ENCODE measurements at regions of chr14 and their contacts with region 1.

Region 1: GRCh38 chr14:21476925-21477681 is at the starts of genes RAB2B and TOX4:
- DNase-seq: peak; percentile 94
- ATAC-seq: peak; percentile 98
- H3K4me3 ChIP-seq: peak within 1 kb of the TSS; percentile 99
- H3K27ac ChIP-seq: peak within 1 kb of the TSS; percentile 77
- H3K4me1 ChIP-seq: peaks cover 5% of the 10 kb centered on the region
- H3K27me3 ChIP-seq: no peaks in the 10 kb centered on the region
- CTCF ChIP-seq: peak; percentile 98 to 99 (median 99)
- EP300 ChIP-seq: peak in 1 of 2 experiments; percentile 46; a peak in 1 of 4 replicates
- POLR2A ChIP-seq: peak; percentile 91
- RAD21 ChIP-seq: peak; percentile 40; the same call in 1 of the 2 replicates
- polyA plus RNA-seq, gene RAB2B: 5.6 to 9.8 TPM
- polyA plus RNA-seq, gene TOX4: 54.7 to 55.5 TPM

Region 2: GRCh38 chr14:21367582-21368144 is 109.4 kb before region 1 on chr14:
- CTCF ChIA-PET with region 1: no interaction called
- POLR2A ChIA-PET with region 1: no interaction called
- RAD21 ChIA-PET with region 1: no interaction called
- SMC1A ChIA-PET with region 1: no interaction called
- in situ Hi-C with region 1: no loop called
- intact Hi-C with region 1: no loop called
- DNase-seq: no peak
- ATAC-seq: no peak
- H3K4me3 ChIP-seq: no peak overlapping the region
- H3K27ac ChIP-seq: no peak overlapping the region
- H3K4me1 ChIP-seq: no peaks in the 10 kb centered on the region
- H3K27me3 ChIP-seq: no peaks in the 10 kb centered on the region
- CTCF ChIP-seq: no peak
- EP300 ChIP-seq: no peak
- POLR2A ChIP-seq: no peak
- RAD21 ChIP-seq: no peak

Region 3: GRCh38 chr14:21510735-21511657 is 33.9 kb after region 1 on chr14 and contains the start of gene METTL3:
- CTCF ChIA-PET with region 1: interaction called, 14 read pairs
- POLR2A ChIA-PET with region 1: interaction called, 4 read pairs
- RAD21 ChIA-PET with region 1: no interaction called
- SMC1A ChIA-PET with region 1: interaction called, 4 read pairs
- in situ Hi-C with region 1: no loop called
- intact Hi-C with region 1: no loop called
- DNase-seq: peak; percentile 97
- ATAC-seq: peak; percentile 98
- H3K4me3 ChIP-seq: peak within 1 kb of the TSS; percentile 94
- H3K27ac ChIP-seq: peak within 1 kb of the TSS; percentile 82
- H3K4me1 ChIP-seq: no peaks in the 10 kb centered on the region; the same call in 1 of the 2 replicates
- H3K27me3 ChIP-seq: no peaks in the 10 kb centered on the region
- CTCF ChIP-seq: no peak
- EP300 ChIP-seq: no peak
- POLR2A ChIP-seq: peak; percentile 87
- RAD21 ChIP-seq: no peak
- polyA plus RNA-seq, gene METTL3: 32.8 to 36.0 TPM

Region 4: GRCh38 chr14:21791749-21792148 is 314.6 kb after region 1 on chr14:
- CTCF ChIA-PET with region 1: no interaction called
- POLR2A ChIA-PET with region 1: no interaction called
- RAD21 ChIA-PET with region 1: no interaction called
- SMC1A ChIA-PET with region 1: no interaction called
- in situ Hi-C with region 1: no loop called
- intact Hi-C with region 1: no loop called
- DNase-seq: no peak
- ATAC-seq: no peak
- H3K4me3 ChIP-seq: no peak overlapping the region
- H3K27ac ChIP-seq: no peak overlapping the region
- H3K4me1 ChIP-seq: no peaks in the 10 kb centered on the region
- H3K27me3 ChIP-seq: no peaks in the 10 kb centered on the region
- CTCF ChIP-seq: no peak
- EP300 ChIP-seq: no peak
- POLR2A ChIP-seq: no peak
- RAD21 ChIP-seq: no peak

Region 5: GRCh38 chr14:22010545-22011252 is 533.6 kb after region 1 on chr14:
- CTCF ChIA-PET with region 1: no interaction called
- POLR2A ChIA-PET with region 1: no interaction called
- RAD21 ChIA-PET with region 1: no interaction called
- SMC1A ChIA-PET with region 1: no interaction called
- in situ Hi-C with region 1: no loop called
- intact Hi-C with region 1: no loop called
- DNase-seq: no peak
- ATAC-seq: no peak
- H3K4me3 ChIP-seq: no peak overlapping the region
- H3K27ac ChIP-seq: no peak overlapping the region
- H3K4me1 ChIP-seq: no peaks in the 10 kb centered on the region
- H3K27me3 ChIP-seq: no peaks in the 10 kb centered on the region
- CTCF ChIP-seq: no peak
- EP300 ChIP-seq: no peak
- POLR2A ChIP-seq: no peak
- RAD21 ChIP-seq: no peak

Region 6: GRCh38 chr14:22147704-22148103 is 670.6 kb after region 1 on chr14:
- CTCF ChIA-PET with region 1: no interaction called
- POLR2A ChIA-PET with region 1: no interaction called
- RAD21 ChIA-PET with region 1: no interaction called
- SMC1A ChIA-PET with region 1: no interaction called
- in situ Hi-C with region 1: no loop called
- intact Hi-C with region 1: no loop called
- DNase-seq: no peak
- ATAC-seq: no peak
- H3K4me3 ChIP-seq: no peak overlapping the region
- H3K27ac ChIP-seq: no peak overlapping the region
- H3K4me1 ChIP-seq: no peaks in the 10 kb centered on the region
- H3K27me3 ChIP-seq: peaks cover 0 to 3% of the 10 kb centered on the region in 2 experiments; a peak in 2 of 4 replicates
- CTCF ChIP-seq: 0 out of 6 replicates have a peak, but pooled peaks of 1 of the 3 experiments have one; percentile 5
- EP300 ChIP-seq: no peak
- POLR2A ChIP-seq: no peak
- RAD21 ChIP-seq: no peak

Measured in GM12878 (cell line).